Panc1 (cell line): ENCODE measurements at regions of chr7 and their contacts with region 1.

Region 1: GRCh38 chr7:141609566-141609965 is 58.4 kb downstream of the AGK start:
- DNase-seq: no peak
- ATAC-seq: no peak
- H3K4me3 ChIP-seq: no peak overlapping the region
- H3K27ac ChIP-seq: no peak overlapping the region
- H3K4me1 ChIP-seq: no peaks in the 10 kb centered on the region
- H3K27me3 ChIP-seq: no peaks in the 10 kb centered on the region
- CTCF ChIP-seq: no peak

Region 2: DNA sequence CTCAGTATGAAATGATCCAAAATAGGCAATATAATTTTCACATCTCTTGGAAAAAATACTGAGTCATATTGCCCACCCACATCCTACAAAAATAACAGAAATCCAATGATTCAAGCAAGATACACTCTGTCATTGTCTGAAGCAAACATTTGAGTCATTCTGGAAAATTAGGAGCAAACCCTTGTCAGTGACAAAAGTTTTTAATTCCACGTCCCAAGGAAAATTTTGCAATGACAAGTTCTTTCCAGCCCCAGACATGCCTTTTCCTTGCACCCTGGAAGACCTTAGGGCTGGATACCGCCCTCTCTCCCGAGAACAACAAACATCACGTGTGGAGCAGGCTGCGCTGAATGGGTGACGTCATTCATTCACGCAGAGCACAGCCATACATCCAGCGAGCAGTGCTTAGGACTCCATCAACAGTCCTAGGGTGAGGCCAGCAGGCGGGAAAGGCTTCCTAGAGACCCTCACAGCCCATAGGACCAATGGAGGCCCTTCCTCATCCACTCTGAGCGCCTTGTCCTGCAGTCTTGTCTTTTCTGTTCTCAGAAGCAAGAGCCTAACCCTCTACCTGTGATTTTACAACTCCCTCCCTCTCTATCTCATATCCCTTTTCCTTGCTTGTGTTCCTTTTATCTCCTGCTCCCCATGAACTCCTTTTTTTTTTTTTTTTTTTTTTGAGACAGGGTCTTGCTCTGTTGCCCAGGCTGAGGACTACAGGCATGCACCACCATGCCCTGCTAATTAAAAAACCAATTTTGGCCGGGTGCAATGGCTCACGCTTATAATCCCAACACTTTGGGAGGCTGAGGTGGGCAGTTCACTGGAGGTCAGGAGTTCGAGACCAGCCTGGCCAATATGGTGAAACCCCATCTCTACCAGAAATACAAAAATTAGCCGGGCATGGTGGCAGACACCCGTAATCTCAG is 1409.2 kb before region 1 on chr7:
- CTCF ChIA-PET with region 1: no interaction called
- POLR2A ChIA-PET with region 1: interaction called, 15 read pairs
- in situ Hi-C with region 1: no loop called
- intact Hi-C with region 1: no loop called
- DNase-seq: peak; percentile 69
- ATAC-seq: peak; percentile 96
- H3K4me3 ChIP-seq: peak overlapping the region in 1 of 2 experiments; percentile 24; a peak in 2 of 4 replicates
- H3K27ac ChIP-seq: no peak overlapping the region
- H3K4me1 ChIP-seq: no peaks in the 10 kb centered on the region
- H3K27me3 ChIP-seq: no peaks in the 10 kb centered on the region; the same call in 1 of the 2 replicates
- CTCF ChIP-seq: no peak

Region 3: GRCh38 chr7:141674702-141675101 is 65.1 kb after region 1 on chr7:
- CTCF ChIA-PET with region 1: no interaction called
- POLR2A ChIA-PET with region 1: no interaction called
- in situ Hi-C with region 1: no loop called
- intact Hi-C with region 1: no loop called
- DNase-seq: no peak
- ATAC-seq: no peak
- H3K4me3 ChIP-seq: no peak overlapping the region
- H3K27ac ChIP-seq: no peak overlapping the region
- H3K4me1 ChIP-seq: no peaks in the 10 kb centered on the region
- H3K27me3 ChIP-seq: no peaks in the 10 kb centered on the region
- CTCF ChIP-seq: peak; percentile 46; the same call in 1 of the 2 replicates